ENCODE measurements at regions of chrX and their contacts with region 1.

Region 1: GRCh38 chrX:45186643-45187026 is 14.0 kb downstream of the DIPK2B start:
- DNase-seq: no peak
- ATAC-seq: peak in 1 of 2 experiments; percentile 54; a peak in 3 of 6 replicates
- H3K4me3 ChIP-seq: no peak overlapping the region; the same call in 1 of the 3 replicates
- H3K27ac ChIP-seq: no peak overlapping the region
- H3K4me1 ChIP-seq: no peaks in the 10 kb centered on the region
- CTCF ChIP-seq: no peak
- EP300 ChIP-seq: no peak
- POLR2A ChIP-seq: no peak
- RAD21 ChIP-seq: no peak

Region 2: DNA sequence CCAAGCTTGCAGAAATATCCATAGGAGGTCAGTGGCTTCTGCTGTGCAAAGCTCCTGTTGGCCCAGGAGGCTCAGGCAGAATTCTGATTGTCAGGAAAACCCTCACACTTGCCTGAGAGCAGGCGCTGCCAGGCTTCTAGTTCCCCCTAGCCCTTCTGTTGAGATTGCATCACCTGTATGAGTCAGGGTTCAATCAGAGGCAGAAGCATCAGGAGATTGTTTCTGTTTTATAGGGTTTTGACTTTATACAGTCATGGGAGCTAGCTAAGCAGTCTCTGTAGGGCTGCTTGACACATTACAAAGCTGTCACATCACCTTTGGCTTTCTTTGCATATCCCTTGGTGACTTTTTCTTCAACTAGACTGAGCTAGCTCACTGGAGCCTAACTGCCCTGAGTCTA is 13.7 kb before region 1 on chrX:
- CTCF ChIA-PET with region 1: interaction called, 14 read pairs
- POLR2A ChIA-PET with region 1: no interaction called
- DNase-seq: peak; percentile 38 to 55
- ATAC-seq: peak; percentile 83 to 85; a peak in 5 of 6 replicates
- H3K4me3 ChIP-seq: no peak overlapping the region
- H3K27ac ChIP-seq: peak overlapping the region; percentile 60 to 81
- H3K4me1 ChIP-seq: peaks cover 12% of the 10 kb centered on the region
- CTCF ChIP-seq: no peak
- EP300 ChIP-seq: no peak
- POLR2A ChIP-seq: no peak
- RAD21 ChIP-seq: no peak

Region 3: GRCh38 chrX:45200741-45201234 is 14.2 kb after region 1 on chrX and contains the start of gene DIPK2B:
- CTCF ChIA-PET with region 1: interaction called, 24 read pairs
- POLR2A ChIA-PET with region 1: no interaction called
- DNase-seq: no peak
- ATAC-seq: no peak
- H3K4me3 ChIP-seq: no peak within 1 kb of the TSS
- H3K27ac ChIP-seq: no peak within 1 kb of the TSS
- H3K4me1 ChIP-seq: no peaks in the 10 kb centered on the region
- CTCF ChIP-seq: no peak
- EP300 ChIP-seq: no peak
- POLR2A ChIP-seq: no peak
- RAD21 ChIP-seq: no peak
- polyA plus RNA-seq, gene DIPK2B: not detected in 2 replicates